ENCODE measurements at regions of chr11 and their contacts with region 1.

Region 1: DNA sequence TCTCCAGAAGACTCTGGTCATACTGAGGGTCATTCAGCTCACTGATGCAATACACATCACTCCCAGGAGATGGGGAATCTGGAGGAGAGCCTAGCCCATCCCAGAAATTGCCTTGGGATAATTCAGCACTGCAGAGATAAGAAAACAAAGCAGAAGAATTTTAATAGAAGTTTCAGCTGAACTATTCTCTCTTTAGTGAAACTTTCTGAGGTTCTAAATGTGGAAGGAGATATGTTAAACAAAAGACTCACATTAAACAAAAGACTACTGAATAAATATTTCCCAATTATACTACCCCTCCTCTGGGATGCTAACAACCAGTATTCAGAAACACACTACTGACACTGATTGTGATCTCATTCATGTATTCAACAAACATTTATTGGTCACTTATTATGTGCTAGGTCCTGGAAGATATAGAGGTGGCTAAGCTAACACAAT is 47.8 kb downstream of the C2CD3 start:
- DNase-seq: no peak
- H3K4me3 ChIP-seq: no peak overlapping the region
- H3K27ac ChIP-seq: no peak overlapping the region
- H3K4me1 ChIP-seq: no peaks in the 10 kb centered on the region
- H3K27me3 ChIP-seq: no peaks in the 10 kb centered on the region
- CTCF ChIP-seq: no peak
- POLR2A ChIP-seq: no peak

Region 2: GRCh38 chr11:72209101-72209500 is 1913.9 kb before region 1 on chr11:
- intact Hi-C with region 1: no loop called
- DNase-seq: peak in 1 of 2 donors; percentile 7
- H3K4me3 ChIP-seq: no peak overlapping the region
- H3K27ac ChIP-seq: no peak overlapping the region
- H3K4me1 ChIP-seq: no peaks in the 10 kb centered on the region
- H3K27me3 ChIP-seq: no peaks in the 10 kb centered on the region
- CTCF ChIP-seq: no peak
- POLR2A ChIP-seq: no peak

Region 3: DNA sequence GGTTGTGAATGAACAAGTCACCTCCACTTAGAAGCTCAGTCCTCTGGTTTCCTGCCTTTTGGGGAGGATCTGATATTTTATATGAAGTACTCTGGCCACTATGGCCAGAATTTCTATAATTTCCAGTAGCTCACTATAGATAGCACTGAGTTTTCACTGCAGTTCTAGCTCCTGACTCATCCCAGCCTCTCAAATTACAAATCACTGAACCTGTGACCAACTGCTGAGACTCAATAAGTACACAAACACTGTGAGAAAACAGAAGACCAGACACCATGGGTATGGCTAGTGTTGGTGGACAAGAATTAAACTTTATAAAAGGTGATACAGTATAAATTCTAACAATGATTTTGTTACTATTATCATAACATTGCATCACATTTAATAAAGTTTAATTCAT is 67.1 kb before region 1 on chr11:
- intact Hi-C with region 1: no loop called
- DNase-seq: no peak
- H3K4me3 ChIP-seq: no peak overlapping the region
- H3K27ac ChIP-seq: no peak overlapping the region
- H3K4me1 ChIP-seq: no peaks in the 10 kb centered on the region
- H3K27me3 ChIP-seq: no peaks in the 10 kb centered on the region
- CTCF ChIP-seq: no peak
- POLR2A ChIP-seq: no peak

Region 4: DNA sequence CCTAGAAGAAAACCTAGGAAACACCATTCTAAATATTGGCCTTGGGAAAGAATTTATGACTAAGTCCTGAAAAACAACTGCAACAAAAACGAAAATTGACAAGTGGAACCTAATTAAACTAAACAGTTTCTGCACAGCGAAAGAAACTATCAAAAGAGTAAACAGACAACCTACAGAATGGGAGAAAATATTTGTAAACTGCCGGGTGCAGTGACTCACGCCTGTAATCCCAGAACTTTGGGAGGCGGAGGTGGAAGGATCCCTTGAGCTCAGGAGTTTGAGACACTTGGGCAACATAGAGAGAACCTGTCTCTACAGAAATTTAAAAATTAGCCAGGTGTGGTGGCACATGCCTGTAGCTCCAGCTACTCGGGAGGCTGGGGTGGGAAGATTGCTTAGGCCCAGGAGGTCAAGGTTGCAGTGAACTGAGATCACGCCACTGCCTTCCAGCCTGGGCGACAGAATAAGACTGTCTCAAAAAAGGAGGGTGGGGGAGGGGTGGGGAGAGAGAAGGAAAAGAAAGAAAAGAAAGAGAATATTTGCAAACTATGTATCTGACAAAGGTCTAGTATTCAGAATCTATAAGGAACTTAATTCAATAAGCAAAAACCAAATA is 959.7 kb after region 1 on chr11:
- intact Hi-C with region 1: loop called (anchors 5 kb)
- DNase-seq: no peak
- H3K4me3 ChIP-seq: no peak overlapping the region
- H3K27ac ChIP-seq: no peak overlapping the region
- H3K4me1 ChIP-seq: no peaks in the 10 kb centered on the region
- H3K27me3 ChIP-seq: no peaks in the 10 kb centered on the region
- CTCF ChIP-seq: no peak
- POLR2A ChIP-seq: no peak